ENCODE measurements at regions of chr2 and their contacts with region 1.

Region 1: DNA sequence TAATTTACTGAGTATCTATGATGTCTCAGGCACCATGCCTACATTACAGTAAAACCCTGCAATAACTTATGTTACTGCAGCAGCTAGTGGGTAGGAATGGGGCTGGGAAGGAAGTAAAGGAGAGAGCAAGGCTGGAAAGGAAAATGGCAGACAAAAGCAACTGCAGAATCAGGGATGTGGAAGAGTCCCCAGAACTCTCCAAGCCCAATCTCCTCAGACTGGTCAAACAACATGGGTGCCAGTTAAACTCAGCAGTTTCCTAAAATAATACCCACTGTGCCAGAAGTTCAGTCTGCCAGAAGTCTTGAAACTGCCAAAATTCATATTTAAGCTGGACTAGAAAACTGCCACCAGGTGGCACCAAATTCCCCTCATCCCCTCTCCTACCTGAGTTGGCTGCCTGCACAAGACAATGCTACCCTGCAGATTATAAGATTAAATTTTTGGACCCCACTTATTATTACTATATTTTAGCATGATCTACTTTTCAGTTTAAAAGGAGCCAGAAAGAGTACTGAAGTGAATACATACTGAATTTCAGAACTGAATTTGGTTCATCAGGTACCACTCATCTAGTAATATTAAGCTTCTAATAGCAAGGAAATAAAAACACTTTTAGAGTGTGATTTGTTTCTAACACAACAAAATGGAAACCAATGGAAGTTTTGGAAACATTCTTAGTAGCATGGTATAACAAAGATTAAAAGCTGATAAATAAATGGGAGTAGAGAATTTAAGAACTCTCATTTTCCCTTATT is 86.8 kb upstream of the DNER start:
- DNase-seq: peak; percentile 38 to 88
- ATAC-seq: peak in 2 of 3 donors; percentile 69 to 70
- H3K4me3 ChIP-seq: no peak overlapping the region
- H3K4me3 Mint-ChIP-seq: no peak overlapping the region
- H3K27ac ChIP-seq: no peak overlapping the region
- H3K27ac Mint-ChIP-seq: peak overlapping the region; percentile 16 to 65
- H3K4me1 ChIP-seq: no peaks in the 10 kb centered on the region
- H3K4me1 Mint-ChIP-seq: no peaks in the 10 kb centered on the region
- H3K27me3 ChIP-seq: no peaks in the 10 kb centered on the region
- H3K27me3 Mint-ChIP-seq: no peaks in the 10 kb centered on the region
- CTCF ChIP-seq: peak; percentile 77

Region 2: DNA sequence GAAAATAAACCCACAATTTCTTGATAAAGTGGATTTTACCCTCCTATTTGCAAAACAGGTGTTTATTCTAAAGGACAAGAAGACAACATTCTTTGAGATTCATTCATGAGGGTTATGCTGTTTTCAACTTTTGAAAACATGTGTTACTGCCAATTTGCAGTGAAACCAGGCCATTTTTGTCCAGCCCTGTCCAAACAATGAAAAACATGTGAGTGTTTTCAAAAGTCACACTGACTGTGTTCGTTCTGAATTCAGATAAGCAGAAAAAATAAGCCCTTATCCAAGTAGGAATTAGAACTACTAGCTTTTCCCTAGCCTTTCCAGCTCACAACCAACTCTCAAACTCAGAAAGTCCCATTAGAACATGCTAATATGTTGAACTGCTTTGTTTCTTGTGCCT is 382.0 kb before region 1 on chr2:
- intact Hi-C with region 1: no loop called
- DNase-seq: no peak
- ATAC-seq: no peak
- H3K4me3 ChIP-seq: no peak overlapping the region
- H3K4me3 Mint-ChIP-seq: no peak overlapping the region
- H3K27ac ChIP-seq: no peak overlapping the region
- H3K27ac Mint-ChIP-seq: no peak overlapping the region
- H3K4me1 ChIP-seq: no peaks in the 10 kb centered on the region
- H3K4me1 Mint-ChIP-seq: no peaks in the 10 kb centered on the region
- H3K27me3 ChIP-seq: no peaks in the 10 kb centered on the region
- H3K27me3 Mint-ChIP-seq: peaks cover 0 to 3% of the 10 kb centered on the region in 2 donors
- CTCF ChIP-seq: no peak

Region 3: GRCh38 chr2:229910832-229911412 is 109.7 kb after region 1 on chr2:
- intact Hi-C with region 1: loop called (anchors 2 kb)
- DNase-seq: peak in 1 of 2 donors; percentile 66
- ATAC-seq: peak; percentile 69 to 76 (median 75)
- H3K4me3 ChIP-seq: no peak overlapping the region
- H3K4me3 Mint-ChIP-seq: no peak overlapping the region
- H3K27ac ChIP-seq: no peak overlapping the region
- H3K27ac Mint-ChIP-seq: peak overlapping the region; percentile 43 to 74
- H3K4me1 ChIP-seq: peaks cover 26% of the 10 kb centered on the region
- H3K4me1 Mint-ChIP-seq: peaks cover 46 to 60% of the 10 kb centered on the region in 2 donors
- H3K27me3 ChIP-seq: no peaks in the 10 kb centered on the region
- H3K27me3 Mint-ChIP-seq: no peaks in the 10 kb centered on the region
- CTCF ChIP-seq: peak; percentile 35

Region 4: GRCh38 chr2:229921892-229922445 is 120.8 kb after region 1 on chr2 and contains the start of gene TRIP12:
- intact Hi-C with region 1: loop called (anchors 1 kb)
- DNase-seq: peak; percentile 90 to 93
- ATAC-seq: peak; percentile 76 to 88 (median 79)
- H3K4me3 ChIP-seq: peak within 1 kb of the TSS; percentile 80
- H3K4me3 Mint-ChIP-seq: peak within 1 kb of the TSS; percentile 98
- H3K27ac ChIP-seq: peak within 1 kb of the TSS; percentile 98
- H3K27ac Mint-ChIP-seq: peak within 1 kb of the TSS; percentile 96 to 99
- H3K4me1 ChIP-seq: peaks cover 18% of the 10 kb centered on the region
- H3K4me1 Mint-ChIP-seq: peaks cover 35 to 47% of the 10 kb centered on the region in 2 donors
- H3K27me3 ChIP-seq: no peaks in the 10 kb centered on the region
- H3K27me3 Mint-ChIP-seq: no peaks in the 10 kb centered on the region
- CTCF ChIP-seq: no peak
- total RNA-seq, gene TRIP12: 295 to 351 (median 325) TPM

Region 5: GRCh38 chr2:230153390-230153976 is 352.3 kb after region 1 on chr2:
- intact Hi-C with region 1: loop called (anchors 10 kb)
- DNase-seq: no peak
- ATAC-seq: no peak
- H3K4me3 ChIP-seq: no peak overlapping the region
- H3K4me3 Mint-ChIP-seq: no peak overlapping the region
- H3K27ac ChIP-seq: no peak overlapping the region
- H3K27ac Mint-ChIP-seq: no peak overlapping the region
- H3K4me1 ChIP-seq: no peaks in the 10 kb centered on the region
- H3K4me1 Mint-ChIP-seq: no peaks in the 10 kb centered on the region
- H3K27me3 ChIP-seq: no peaks in the 10 kb centered on the region
- H3K27me3 Mint-ChIP-seq: no peaks in the 10 kb centered on the region
- CTCF ChIP-seq: no peak

Measured in natural killer cell (primary cell).